ENCODE measurements at regions of chr6 and their contacts with region 1.

Region 1: GRCh38 chr6:130708338-130708737 is 118.9 kb upstream of the SMLR1 start:
- DNase-seq: no peak
- H3K4me3 ChIP-seq: no peak overlapping the region
- CTCF ChIP-seq: no peak
- POLR2A ChIP-seq: no peak

Region 2: DNA sequence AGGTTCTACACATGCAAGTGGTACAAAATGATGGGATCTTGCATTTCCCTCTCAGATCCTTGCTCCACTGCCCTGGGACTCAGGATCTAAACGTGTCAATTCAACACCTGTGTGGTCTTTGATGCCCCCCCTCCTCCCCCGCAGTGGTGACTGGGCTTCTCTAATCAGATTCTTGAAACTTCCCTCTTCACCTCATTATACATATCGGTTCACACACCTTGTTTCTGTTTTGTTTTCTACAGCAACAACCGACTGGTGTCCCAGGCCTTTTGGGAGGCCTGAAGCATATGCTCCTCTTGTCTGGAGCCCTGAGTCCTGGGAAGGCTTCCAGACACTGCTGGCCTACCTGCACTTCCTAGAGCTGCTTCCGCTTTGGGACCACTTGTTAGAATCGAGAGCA is 505.6 kb before region 1 on chr6:
- intact Hi-C with region 1: no loop called
- DNase-seq: no peak
- H3K4me3 ChIP-seq: no peak overlapping the region
- CTCF ChIP-seq: no peak
- POLR2A ChIP-seq: no peak

Region 3: DNA sequence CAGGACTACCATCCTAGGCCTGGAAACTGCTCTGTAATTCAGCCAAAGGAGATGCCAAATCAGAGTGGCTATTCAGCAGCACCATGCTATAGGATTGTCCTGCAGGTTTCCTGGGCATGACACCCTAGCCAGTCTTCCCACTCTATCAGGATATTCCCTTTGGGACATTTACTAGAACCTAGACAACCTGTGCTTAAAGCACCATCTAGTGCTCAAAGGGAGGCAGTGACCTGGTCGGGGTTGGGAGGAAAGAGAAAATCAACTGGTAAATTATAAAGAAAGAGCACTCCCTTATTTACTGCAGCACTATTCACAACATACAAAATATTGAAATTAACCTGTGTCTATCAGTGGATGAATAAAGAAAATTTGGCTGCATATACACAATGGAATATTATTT is 51.7 kb after region 1 on chr6:
- intact Hi-C with region 1: loop called (anchors 2 kb)
- DNase-seq: no peak
- H3K4me3 ChIP-seq: no peak overlapping the region
- CTCF ChIP-seq: no peak
- POLR2A ChIP-seq: no peak